ENCODE measurements at regions of chr21 and their contacts with region 1.

Region 1: DNA sequence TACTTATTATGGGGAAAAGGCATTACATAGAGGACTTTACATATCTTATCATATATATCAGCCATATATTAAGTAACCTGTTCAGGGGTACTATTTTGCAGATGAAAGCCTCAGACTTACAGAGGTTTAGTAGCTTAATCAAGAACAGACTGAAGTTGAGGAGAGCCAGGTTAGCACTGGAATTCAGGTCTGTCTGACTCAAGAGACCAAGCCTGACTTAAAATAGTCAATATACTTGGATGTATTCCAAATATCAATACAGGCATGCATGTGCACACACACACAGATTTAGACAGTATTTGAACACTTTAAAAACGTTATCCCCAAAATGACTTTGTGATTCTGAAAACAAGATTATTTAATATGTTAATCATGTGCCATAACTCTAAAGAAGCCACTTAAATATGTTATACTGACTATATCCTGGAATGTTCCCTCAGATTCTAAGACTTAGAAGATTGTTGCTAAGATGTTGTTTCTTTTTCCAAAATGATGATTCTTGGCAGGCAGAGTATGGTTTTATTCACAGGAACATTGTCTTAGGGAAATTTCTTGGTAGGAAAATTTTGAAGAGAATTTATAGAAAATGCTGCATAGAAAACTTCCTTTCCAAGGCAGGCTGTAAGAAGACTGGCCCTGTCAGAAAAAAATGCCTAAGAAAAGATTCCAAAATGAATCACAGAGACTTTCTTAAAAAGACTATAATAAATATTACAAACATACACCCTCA is 61.6 kb downstream of the ADAMTS1 start:
- DNase-seq: no peak
- H3K4me3 ChIP-seq: no peak overlapping the region
- H3K27ac ChIP-seq: no peak overlapping the region
- H3K4me1 ChIP-seq: no peaks in the 10 kb centered on the region
- H3K27me3 ChIP-seq: no peaks in the 10 kb centered on the region
- CTCF ChIP-seq: no peak
- POLR2A ChIP-seq: no peak

Region 2: GRCh38 chr21:26801524-26801923 is 17.9 kb after region 1 on chr21:
- intact Hi-C with region 1: loop called (anchors 2 kb)
- DNase-seq: no peak
- H3K4me3 ChIP-seq: no peak overlapping the region
- H3K27ac ChIP-seq: peak overlapping the region; percentile 86
- H3K4me1 ChIP-seq: peaks cover 32% of the 10 kb centered on the region
- H3K27me3 ChIP-seq: no peaks in the 10 kb centered on the region
- CTCF ChIP-seq: no peak
- POLR2A ChIP-seq: no peak